Activated CD4-positive, alpha-beta T cell treated with anti-CD3 and anti-CD28 coated beads for 36 hours (primary cell): ENCODE measurements at regions of chr9 and their contacts with region 1.

Region 1: DNA sequence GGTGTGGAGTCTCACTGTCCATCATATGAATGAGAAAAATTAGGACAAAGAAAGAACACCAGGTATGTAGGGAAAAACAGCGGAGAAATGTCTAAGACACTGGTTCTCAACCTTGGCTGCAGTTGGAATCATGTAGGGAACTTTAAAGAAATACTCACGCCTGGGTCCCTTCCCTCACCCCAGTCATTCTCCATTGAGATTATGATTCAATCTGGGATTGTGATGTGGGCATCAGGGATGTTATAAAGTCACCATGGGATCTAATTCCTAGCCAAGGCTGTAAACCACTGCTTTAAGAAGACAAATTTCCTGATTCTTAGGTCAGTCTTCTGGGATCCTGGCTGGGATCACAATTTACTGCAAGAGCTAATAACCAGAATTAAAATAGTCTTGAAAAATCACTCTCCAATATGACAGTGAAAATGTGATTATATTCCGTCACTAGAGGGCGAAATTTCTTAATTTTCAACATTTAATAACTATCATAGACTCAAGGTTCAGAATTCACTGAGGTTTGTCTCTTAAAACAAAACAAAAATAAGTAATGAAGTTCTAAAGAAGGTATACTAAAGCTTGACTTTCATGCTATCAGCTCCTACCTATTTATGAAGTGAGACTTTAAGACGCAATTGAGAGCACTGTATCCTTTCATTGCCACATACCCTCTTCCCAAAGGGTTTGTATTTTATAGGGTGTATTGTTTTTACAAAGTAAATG is 60.5 kb downstream of the GLDC start:
- DNase-seq: no peak
- ATAC-seq: no peak
- H3K4me3 Mint-ChIP-seq: no peak overlapping the region
- H3K27ac Mint-ChIP-seq: no peak overlapping the region
- H3K4me1 Mint-ChIP-seq: no peaks in the 10 kb centered on the region
- H3K27me3 Mint-ChIP-seq: peaks cover 3% of the 10 kb centered on the region

Region 2: GRCh38 chr9:6667633-6668280 is 82.7 kb after region 1 on chr9:
- CTCF ChIA-PET with region 1: interaction called, 13 read pairs
- POLR2A ChIA-PET with region 1: no interaction called
- intact Hi-C with region 1: loop called (anchors 1 kb)
- DNase-seq: no peak
- ATAC-seq: no peak
- H3K4me3 Mint-ChIP-seq: no peak overlapping the region
- H3K27ac Mint-ChIP-seq: no peak overlapping the region
- H3K4me1 Mint-ChIP-seq: no peaks in the 10 kb centered on the region
- H3K27me3 Mint-ChIP-seq: no peaks in the 10 kb centered on the region

Region 3: GRCh38 chr9:6739218-6739617 is 154.2 kb after region 1 on chr9:
- CTCF ChIA-PET with region 1: interaction called, 4 read pairs
- POLR2A ChIA-PET with region 1: no interaction called
- intact Hi-C with region 1: loop called (anchors 2 to 5 kb)
- DNase-seq: no peak
- ATAC-seq: no peak
- H3K4me3 Mint-ChIP-seq: no peak overlapping the region
- H3K27ac Mint-ChIP-seq: no peak overlapping the region
- H3K4me1 Mint-ChIP-seq: no peaks in the 10 kb centered on the region
- H3K27me3 Mint-ChIP-seq: no peaks in the 10 kb centered on the region